ENCODE measurements at regions of chr10 and their contacts with region 1.

Region 1: DNA sequence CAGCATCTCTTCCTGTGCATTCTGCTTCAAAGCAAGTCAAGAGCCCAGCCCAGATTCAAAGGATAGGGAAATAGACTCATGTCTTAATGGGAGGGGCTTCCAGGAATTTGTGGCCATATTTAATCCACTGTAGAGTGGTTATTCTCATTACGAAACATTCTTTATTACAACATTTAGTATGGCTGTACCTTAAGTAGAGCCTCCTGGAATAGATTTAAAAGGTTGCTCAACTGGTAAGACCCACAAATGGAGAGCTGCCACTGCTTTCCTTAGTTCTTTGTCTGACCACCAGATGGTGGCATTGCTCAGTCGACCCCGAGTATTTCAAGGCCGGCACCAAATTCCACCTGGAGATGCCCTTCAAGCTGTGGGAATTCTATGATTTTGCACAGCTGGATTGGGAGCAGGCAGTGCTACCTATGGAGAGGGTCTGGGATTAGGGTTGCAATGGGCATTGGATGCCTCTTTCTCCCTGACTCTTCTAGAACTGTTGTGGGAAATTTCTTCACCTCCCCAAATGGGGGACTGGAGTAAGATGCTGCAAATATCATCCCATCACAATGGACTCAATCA is 102.2 kb downstream of the RBM20 start:
- DNase-seq: peak in 1 of 2 donors; percentile 79
- ATAC-seq: peak; percentile 55 to 70 (median 61)
- H3K4me3 ChIP-seq: no peak overlapping the region
- H3K4me3 Mint-ChIP-seq: no peak overlapping the region
- H3K27ac ChIP-seq: no peak overlapping the region
- H3K27ac Mint-ChIP-seq: no peak overlapping the region
- H3K4me1 ChIP-seq: no peaks in the 10 kb centered on the region
- H3K4me1 Mint-ChIP-seq: no peaks in the 10 kb centered on the region
- H3K27me3 ChIP-seq: no peaks in the 10 kb centered on the region
- H3K27me3 Mint-ChIP-seq: peaks cover 5 to 13% of the 10 kb centered on the region in 2 donors
- CTCF ChIP-seq: peak; percentile 79

Region 2: GRCh38 chr10:110834629-110835301 is 88.4 kb after region 1 on chr10:
- intact Hi-C with region 1: no loop called
- DNase-seq: peak in 1 of 2 donors; percentile 71
- ATAC-seq: no peak
- H3K4me3 ChIP-seq: no peak overlapping the region
- H3K4me3 Mint-ChIP-seq: no peak overlapping the region
- H3K27ac ChIP-seq: no peak overlapping the region
- H3K27ac Mint-ChIP-seq: no peak overlapping the region
- H3K4me1 ChIP-seq: peaks cover 5% of the 10 kb centered on the region
- H3K4me1 Mint-ChIP-seq: peaks cover 0 to 6% of the 10 kb centered on the region in 2 donors
- H3K27me3 ChIP-seq: no peaks in the 10 kb centered on the region
- H3K27me3 Mint-ChIP-seq: no peaks in the 10 kb centered on the region
- CTCF ChIP-seq: no peak

Region 3: DNA sequence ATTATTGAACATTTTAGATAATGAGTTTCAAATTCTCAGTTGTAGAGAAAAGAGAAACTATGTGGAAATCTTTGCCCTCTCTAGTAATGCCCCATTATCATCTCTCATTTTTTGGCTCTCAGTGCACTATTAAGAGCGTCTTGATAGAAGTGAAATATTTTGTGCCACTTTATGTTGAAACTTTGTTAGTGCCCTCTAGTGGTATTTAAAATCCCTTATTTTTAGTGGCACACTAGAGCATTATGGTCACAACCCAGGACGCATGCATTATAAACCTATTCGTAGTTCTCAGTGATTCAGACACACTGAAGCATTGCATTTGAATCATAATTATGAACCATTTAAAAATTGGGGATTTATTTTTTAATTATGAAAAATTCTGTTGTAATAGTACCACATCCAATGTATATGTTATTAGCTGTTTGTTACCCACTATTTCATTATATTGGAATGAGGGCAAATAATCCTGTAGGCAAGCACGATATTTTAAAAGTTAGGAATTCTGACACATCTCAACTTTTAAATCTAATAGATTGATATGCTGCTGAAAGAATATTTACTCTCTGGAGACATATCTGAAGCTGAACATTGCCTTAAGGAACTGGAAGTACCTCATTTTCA is 147.3 kb after region 1 on chr10:
- intact Hi-C with region 1: loop called (anchors 1 kb)
- DNase-seq: peak in 1 of 2 donors; percentile 75
- ATAC-seq: peak; percentile 75 to 91 (median 89)
- H3K4me3 ChIP-seq: no peak overlapping the region
- H3K4me3 Mint-ChIP-seq: no peak overlapping the region
- H3K27ac ChIP-seq: no peak overlapping the region
- H3K27ac Mint-ChIP-seq: no peak overlapping the region
- H3K4me1 ChIP-seq: no peaks in the 10 kb centered on the region
- H3K4me1 Mint-ChIP-seq: peaks cover 8 to 21% of the 10 kb centered on the region in 2 donors
- H3K27me3 ChIP-seq: no peaks in the 10 kb centered on the region
- H3K27me3 Mint-ChIP-seq: no peaks in the 10 kb centered on the region
- CTCF ChIP-seq: peak; percentile 69

Region 4: DNA sequence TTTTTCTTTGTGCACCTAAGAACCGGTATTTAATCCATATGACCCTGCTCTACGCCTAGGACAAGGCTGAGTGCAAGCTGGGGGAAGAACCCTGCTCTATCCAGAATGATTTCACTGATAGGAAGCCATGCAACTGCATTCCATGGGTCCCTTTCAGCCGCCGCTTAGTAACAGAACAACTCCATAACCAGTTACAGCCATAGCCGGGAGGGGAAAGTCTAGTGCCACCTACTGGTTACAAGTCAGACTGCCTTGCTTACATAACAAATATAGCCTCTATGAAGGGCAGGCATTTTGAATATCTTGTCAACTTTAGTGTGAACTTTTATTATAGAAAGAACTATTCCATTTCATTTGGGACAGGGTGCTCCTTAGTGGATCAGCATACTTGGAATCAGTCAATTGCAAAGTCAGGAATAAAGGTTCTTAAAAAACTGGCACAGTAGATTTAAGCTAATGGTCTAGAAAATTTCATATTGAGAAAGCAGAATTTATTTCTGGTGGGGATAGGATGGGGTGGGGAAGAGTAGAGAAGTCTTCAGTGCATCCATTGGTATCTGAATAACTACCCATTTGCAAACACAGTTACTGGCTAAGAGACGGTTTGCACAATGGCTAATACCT is 852.2 kb after region 1 on chr10:
- intact Hi-C with region 1: loop called (anchors 5 kb)
- DNase-seq: peak in 1 of 2 donors; percentile 67
- ATAC-seq: peak in 2 of 3 donors; percentile 54 to 61
- H3K4me3 ChIP-seq: no peak overlapping the region
- H3K4me3 Mint-ChIP-seq: no peak overlapping the region
- H3K27ac ChIP-seq: no peak overlapping the region
- H3K27ac Mint-ChIP-seq: no peak overlapping the region
- H3K4me1 ChIP-seq: no peaks in the 10 kb centered on the region
- H3K4me1 Mint-ChIP-seq: no peaks in the 10 kb centered on the region
- H3K27me3 ChIP-seq: no peaks in the 10 kb centered on the region
- H3K27me3 Mint-ChIP-seq: peaks cover 0 to 3% of the 10 kb centered on the region in 2 donors
- CTCF ChIP-seq: peak; percentile 49

Region 5: DNA sequence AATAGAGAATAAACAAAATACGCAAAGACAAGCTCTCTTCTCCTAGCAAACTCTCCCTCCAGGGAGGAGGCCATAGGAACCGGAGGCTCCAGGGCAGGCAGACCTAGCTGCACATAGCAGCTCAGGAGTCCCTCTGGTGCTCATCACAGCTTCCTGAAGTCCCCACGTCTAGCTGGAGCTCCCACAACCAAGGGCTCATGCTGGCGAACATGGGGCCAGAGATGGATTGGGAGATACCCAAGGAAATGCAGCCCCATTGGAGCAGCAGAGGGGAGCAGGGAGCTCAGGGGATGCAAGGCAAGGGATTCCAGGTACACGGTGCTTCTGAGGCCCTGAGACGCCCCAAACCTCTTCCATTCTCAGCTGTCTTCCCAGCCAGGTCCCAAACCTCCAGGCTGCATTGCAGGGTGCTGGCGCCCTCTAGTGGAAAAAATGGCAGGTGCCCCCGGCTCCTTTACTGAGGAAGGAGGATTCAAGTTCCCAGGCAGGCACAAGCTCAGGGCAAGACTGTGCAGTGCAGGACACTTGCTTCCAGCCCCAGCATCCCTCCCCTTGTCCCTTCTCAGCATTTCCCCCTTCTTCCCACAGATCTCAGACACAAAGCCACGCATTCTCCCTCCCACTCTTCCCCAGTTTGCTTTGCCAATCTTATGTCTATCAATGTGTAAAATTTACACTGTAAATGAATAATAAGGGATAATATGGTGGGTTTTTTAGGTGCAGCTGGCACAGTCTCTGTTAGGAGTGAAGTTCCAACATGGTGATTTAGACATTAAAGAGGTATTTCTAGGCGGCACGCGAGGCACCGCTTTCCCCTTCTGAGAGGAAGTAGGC is 1391.0 kb after region 1 on chr10:
- intact Hi-C with region 1: loop called (anchors 1 kb)
- DNase-seq: peak; percentile 42 to 64
- ATAC-seq: peak in 2 of 3 donors; percentile 49 to 55
- H3K4me3 ChIP-seq: no peak overlapping the region
- H3K4me3 Mint-ChIP-seq: no peak overlapping the region
- H3K27ac ChIP-seq: no peak overlapping the region
- H3K27ac Mint-ChIP-seq: no peak overlapping the region
- H3K4me1 ChIP-seq: no peaks in the 10 kb centered on the region
- H3K4me1 Mint-ChIP-seq: peaks cover 0 to 10% of the 10 kb centered on the region in 2 donors
- H3K27me3 ChIP-seq: no peaks in the 10 kb centered on the region
- H3K27me3 Mint-ChIP-seq: peaks cover 0 to 4% of the 10 kb centered on the region in 2 donors
- CTCF ChIP-seq: peak; percentile 69